Naive thymus-derived CD4-positive, alpha-beta T cell (primary cell): ENCODE measurements at regions of chr5 and their contacts with region 1.

Region 1: GRCh38 chr5:81513982-81514381 is 120.0 kb upstream of the ACOT12 start:
- DNase-seq: peak in 4 of 9 donors; percentile 20 to 32 (median 22)
- ATAC-seq: peak; percentile 55
- H3K4me3 ChIP-seq: no peak overlapping the region
- H3K4me3 Mint-ChIP-seq: no peak overlapping the region
- H3K27ac ChIP-seq: no peak overlapping the region
- H3K27ac Mint-ChIP-seq: peak overlapping the region in 2 of 9 donors; percentile 8 to 18
- H3K4me1 ChIP-seq: no peaks in the 10 kb centered on the region
- H3K4me1 Mint-ChIP-seq: peaks cover 0 to 24% (median 6%) of the 10 kb centered on the region in 7 donors
- H3K27me3 ChIP-seq: no peaks in the 10 kb centered on the region
- H3K27me3 Mint-ChIP-seq: no peaks in the 10 kb centered on the region

Region 2: DNA sequence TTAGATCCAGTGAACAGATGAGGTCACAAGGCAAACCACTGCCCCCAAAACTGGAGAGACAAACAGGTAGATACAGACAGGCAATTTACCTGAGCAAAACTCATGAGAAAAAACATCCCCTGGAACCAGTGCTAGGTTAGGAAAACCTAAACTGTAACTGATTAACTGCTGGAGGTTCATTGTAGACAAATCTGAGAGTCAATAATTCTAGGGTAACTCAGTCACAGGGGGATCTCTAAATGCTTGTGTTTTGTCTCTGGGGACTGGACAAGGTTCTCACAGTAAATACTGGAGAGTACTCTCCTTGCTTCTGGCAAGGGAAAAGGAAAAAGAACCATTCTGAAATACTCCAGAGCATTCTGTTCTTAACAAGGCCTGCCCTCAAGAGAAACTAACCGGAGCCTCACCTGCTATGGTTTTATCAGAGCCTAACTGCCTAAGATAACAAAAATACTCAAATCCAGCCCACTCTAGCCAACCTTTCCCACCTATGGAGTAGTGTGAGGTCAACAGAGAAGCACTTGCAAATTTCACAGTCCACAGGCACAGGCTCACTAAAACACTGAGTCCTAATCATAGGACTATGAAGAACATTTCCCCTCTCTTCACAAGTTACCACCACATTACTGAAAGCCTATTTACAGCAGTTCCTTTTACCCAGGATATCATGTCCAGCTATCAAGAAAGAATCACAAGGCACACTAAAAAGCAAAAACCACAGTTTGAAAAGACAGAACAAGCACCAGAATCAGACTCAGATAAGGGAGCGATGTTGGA is 19.8 kb after region 1 on chr5:
- CTCF ChIA-PET with region 1: interaction called, 3 read pairs
- POLR2A ChIA-PET with region 1: no interaction called
- intact Hi-C with region 1: loop called in 1 of 2 experiments (anchors 2 kb)
- DNase-seq: no peak
- ATAC-seq: no peak
- H3K4me3 ChIP-seq: no peak overlapping the region
- H3K4me3 Mint-ChIP-seq: peak overlapping the region in 9 of 10 donors; percentile 8 to 74 (median 50)
- H3K27ac ChIP-seq: peak overlapping the region; percentile 22
- H3K27ac Mint-ChIP-seq: peak overlapping the region in 8 of 9 donors; percentile 77 to 92 (median 85)
- H3K4me1 ChIP-seq: peaks cover 0 to 38% of the 10 kb centered on the region in 2 donors
- H3K4me1 Mint-ChIP-seq: peaks cover 28 to 98% (median 78%) of the 10 kb centered on the region in 7 donors
- H3K27me3 ChIP-seq: no peaks in the 10 kb centered on the region
- H3K27me3 Mint-ChIP-seq: no peaks in the 10 kb centered on the region

Region 3: GRCh38 chr5:81606150-81606549 is 92.2 kb after region 1 on chr5:
- CTCF ChIA-PET with region 1: no interaction called
- POLR2A ChIA-PET with region 1: no interaction called
- intact Hi-C with region 1: loop called in 1 of 2 experiments (anchors 5 kb)
- DNase-seq: no peak
- ATAC-seq: no peak
- H3K4me3 ChIP-seq: no peak overlapping the region
- H3K4me3 Mint-ChIP-seq: no peak overlapping the region
- H3K27ac ChIP-seq: no peak overlapping the region
- H3K27ac Mint-ChIP-seq: no peak overlapping the region
- H3K4me1 ChIP-seq: no peaks in the 10 kb centered on the region
- H3K4me1 Mint-ChIP-seq: peaks cover 6 to 64% (median 39%) of the 10 kb centered on the region in 7 donors
- H3K27me3 ChIP-seq: no peaks in the 10 kb centered on the region
- H3K27me3 Mint-ChIP-seq: no peaks in the 10 kb centered on the region

Region 4: GRCh38 chr5:82165740-82166530 is 652.0 kb after region 1 on chr5:
- CTCF ChIA-PET with region 1: interaction called, 20 read pairs
- POLR2A ChIA-PET with region 1: no interaction called
- intact Hi-C with region 1: loop called (anchors 1 to 2 kb)
- DNase-seq: peak in 7 of 9 donors; percentile 39 to 70 (median 58)
- ATAC-seq: peak; percentile 96
- H3K4me3 ChIP-seq: no peak overlapping the region
- H3K4me3 Mint-ChIP-seq: no peak overlapping the region
- H3K27ac ChIP-seq: no peak overlapping the region
- H3K27ac Mint-ChIP-seq: peak overlapping the region in 6 of 9 donors; percentile 3 to 65 (median 17)
- H3K4me1 ChIP-seq: no peaks in the 10 kb centered on the region
- H3K4me1 Mint-ChIP-seq: peaks cover 0 to 12% (median 7%) of the 10 kb centered on the region in 7 donors
- H3K27me3 ChIP-seq: no peaks in the 10 kb centered on the region
- H3K27me3 Mint-ChIP-seq: no peaks in the 10 kb centered on the region